T-cell (primary cell): ENCODE measurements at regions of chr5 and their contacts with region 1.

Region 1: DNA sequence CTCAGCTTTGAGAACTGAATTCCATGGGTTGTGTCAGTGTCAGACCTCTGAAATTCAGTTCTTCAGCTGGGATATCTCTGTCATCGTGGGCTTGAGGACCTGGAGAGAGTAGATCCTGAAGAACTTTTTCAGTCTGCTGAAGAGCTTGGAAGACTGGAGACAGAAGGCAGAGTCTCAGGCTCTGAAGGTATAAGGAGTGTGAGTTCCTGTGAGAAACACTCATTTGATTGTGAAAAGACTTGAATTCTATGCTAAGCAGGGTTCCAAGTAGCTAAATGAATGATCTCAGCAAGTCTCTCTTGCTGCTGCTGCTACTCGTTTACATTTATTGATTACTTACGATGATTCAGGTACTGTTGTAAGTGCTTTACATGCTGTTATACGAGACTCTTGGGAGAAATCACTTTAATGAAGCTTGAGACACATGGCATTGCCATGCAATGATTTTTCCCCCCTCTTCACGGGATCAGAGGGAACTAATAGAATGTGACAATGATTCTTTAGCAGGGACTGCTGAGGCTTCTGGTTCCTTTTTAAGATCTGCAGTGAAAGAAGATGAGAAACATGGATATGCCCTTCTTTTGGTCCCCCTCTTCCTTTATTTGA is 63.8 kb downstream of the PTTG1 start:
- DNase-seq: no peak
- ATAC-seq: no peak
- H3K4me3 ChIP-seq: no peak overlapping the region
- H3K4me3 Mint-ChIP-seq: no peak overlapping the region
- H3K27ac ChIP-seq: peak overlapping the region; percentile 43
- H3K27ac Mint-ChIP-seq: peak overlapping the region; percentile 79 to 83
- H3K4me1 ChIP-seq: peaks cover 0 to 25% of the 10 kb centered on the region in 2 experiments
- H3K4me1 Mint-ChIP-seq: peaks cover 13 to 39% (median 35%) of the 10 kb centered on the region in 3 donors
- H3K27me3 ChIP-seq: no peaks in the 10 kb centered on the region
- H3K27me3 Mint-ChIP-seq: no peaks in the 10 kb centered on the region

Region 2: GRCh38 chr5:160675988-160676387 is 190.5 kb after region 1 on chr5:
- CTCF ChIA-PET with region 1: no interaction called
- POLR2A ChIA-PET with region 1: interaction called in 1 of 2 experiments, 11 read pairs
- DNase-seq: no peak
- ATAC-seq: no peak
- H3K4me3 ChIP-seq: no peak overlapping the region
- H3K4me3 Mint-ChIP-seq: no peak overlapping the region
- H3K27ac ChIP-seq: no peak overlapping the region
- H3K27ac Mint-ChIP-seq: no peak overlapping the region
- H3K4me1 ChIP-seq: no peaks in the 10 kb centered on the region
- H3K4me1 Mint-ChIP-seq: no peaks in the 10 kb centered on the region
- H3K27me3 ChIP-seq: no peaks in the 10 kb centered on the region
- H3K27me3 Mint-ChIP-seq: peaks cover 5 to 12% of the 10 kb centered on the region in 2 donors